Activated T-helper 1 cell treated with anti-CD3 and anti-CD28 coated beads, Interleukin-12 subunit alpha, Interleukin-12 subunit beta, Interleukin-2, Interleukin-4 antibody, amounts not matched to agents 30 ng/mL and 10 ng/mL and 1 ng/mL, durations not matched to agents 14 hours and 24 hours and 36 hours (primary cell): ENCODE measurements at regions of chr19 and their contacts with region 1.

Region 1: GRCh38 chr19:53867225-53868090 is at the start of gene MYADM:
- DNase-seq: peak; percentile 100
- H3K4me3 Mint-ChIP-seq: peak within 1 kb of the TSS; percentile 94
- H3K27ac Mint-ChIP-seq: peak within 1 kb of the TSS; percentile 96
- H3K4me1 Mint-ChIP-seq: peaks cover 37% of the 10 kb centered on the region
- H3K27me3 Mint-ChIP-seq: peaks cover 3% of the 10 kb centered on the region
- total RNA-seq, gene MYADM: 58.8 and 63.1 TPM in 2 replicates

Region 2: GRCh38 chr19:53333463-53334449 is 533.7 kb before region 1 on chr19 and contains the start of gene ZNF845:
- intact Hi-C with region 1: loop called (anchors 1 kb)
- DNase-seq: peak; percentile 95
- H3K4me3 Mint-ChIP-seq: peak within 1 kb of the TSS; percentile 91
- H3K27ac Mint-ChIP-seq: peak within 1 kb of the TSS; percentile 80
- H3K4me1 Mint-ChIP-seq: peaks cover 10% of the 10 kb centered on the region
- H3K27me3 Mint-ChIP-seq: no peaks in the 10 kb centered on the region
- total RNA-seq, gene ZNF845: 6.5 and 6.7 TPM in 2 replicates

Region 3: DNA sequence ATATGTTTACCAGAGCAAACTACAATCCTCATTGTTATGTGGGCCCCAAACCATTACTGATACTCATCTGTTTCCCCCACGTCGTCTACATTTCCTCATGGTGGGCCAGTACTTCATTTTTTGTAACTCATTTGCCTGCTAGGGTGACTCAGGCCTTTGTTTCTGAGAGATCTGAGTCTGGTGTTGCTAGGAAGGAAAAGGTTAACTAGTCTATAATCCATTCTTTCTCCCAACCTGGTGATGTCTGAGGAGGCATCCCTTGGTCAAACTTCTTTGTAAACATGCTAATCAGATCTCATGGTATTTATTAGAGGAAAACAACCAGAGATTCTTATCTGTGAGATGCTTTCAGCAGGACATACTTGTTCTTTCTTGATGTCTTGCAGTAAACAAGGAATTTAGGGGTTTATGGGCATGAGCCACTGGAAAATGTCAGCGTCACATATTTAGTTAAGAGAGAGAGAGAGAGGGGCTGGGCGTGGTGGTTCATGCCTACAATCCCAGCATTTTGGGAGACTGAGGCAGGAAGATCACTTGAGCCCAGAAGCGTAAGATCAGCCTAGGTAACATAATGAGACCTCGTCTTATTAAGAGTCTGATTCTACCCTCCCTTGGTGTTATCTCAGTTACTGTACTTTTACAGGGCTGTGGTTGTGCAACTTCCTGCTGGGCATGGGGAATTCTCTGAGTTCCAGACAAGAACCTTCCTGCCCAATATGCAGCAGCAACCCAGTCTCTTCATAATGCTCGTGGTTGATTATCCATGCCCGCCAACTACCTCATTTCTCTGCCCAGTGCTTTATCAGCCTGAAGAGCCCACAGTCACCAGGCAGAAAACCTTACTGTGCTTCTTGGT is 245.3 kb before region 1 on chr19:
- intact Hi-C with region 1: no loop called
- DNase-seq: no peak
- H3K4me3 Mint-ChIP-seq: no peak overlapping the region
- H3K27ac Mint-ChIP-seq: no peak overlapping the region
- H3K4me1 Mint-ChIP-seq: no peaks in the 10 kb centered on the region
- H3K27me3 Mint-ChIP-seq: no peaks in the 10 kb centered on the region

Region 4: DNA sequence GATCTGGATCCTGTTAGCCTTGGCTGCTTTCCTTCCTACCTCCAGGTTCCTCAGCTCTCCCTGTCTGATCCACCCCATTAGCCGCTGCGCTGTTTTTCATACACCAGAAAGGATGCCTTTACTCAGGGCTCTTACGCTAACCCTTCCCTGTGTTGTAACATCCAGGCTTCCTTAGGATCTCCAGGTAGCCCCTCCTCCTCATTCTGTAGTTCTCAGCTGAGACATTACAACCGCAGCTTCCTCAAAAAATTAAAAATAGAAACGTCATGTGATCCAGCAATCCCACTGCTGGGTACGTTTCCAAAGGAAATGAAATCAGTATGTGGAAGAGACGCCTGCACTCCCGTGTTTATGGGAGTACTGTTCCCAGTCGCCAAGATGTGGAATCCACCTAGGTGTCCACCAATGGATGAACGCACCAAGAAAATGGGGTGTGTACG is 18.2 kb before region 1 on chr19:
- intact Hi-C with region 1: loop called (anchors 1 kb)
- DNase-seq: no peak
- H3K4me3 Mint-ChIP-seq: no peak overlapping the region
- H3K27ac Mint-ChIP-seq: no peak overlapping the region
- H3K4me1 Mint-ChIP-seq: peaks cover 20% of the 10 kb centered on the region
- H3K27me3 Mint-ChIP-seq: peaks cover 20% of the 10 kb centered on the region

Region 5: GRCh38 chr19:53942001-53942786 is 74.7 kb after region 1 on chr19:
- intact Hi-C with region 1: no loop called
- DNase-seq: no peak
- H3K4me3 Mint-ChIP-seq: no peak overlapping the region
- H3K27ac Mint-ChIP-seq: no peak overlapping the region
- H3K4me1 Mint-ChIP-seq: no peaks in the 10 kb centered on the region
- H3K27me3 Mint-ChIP-seq: peaks cover 15% of the 10 kb centered on the region

Region 6: DNA sequence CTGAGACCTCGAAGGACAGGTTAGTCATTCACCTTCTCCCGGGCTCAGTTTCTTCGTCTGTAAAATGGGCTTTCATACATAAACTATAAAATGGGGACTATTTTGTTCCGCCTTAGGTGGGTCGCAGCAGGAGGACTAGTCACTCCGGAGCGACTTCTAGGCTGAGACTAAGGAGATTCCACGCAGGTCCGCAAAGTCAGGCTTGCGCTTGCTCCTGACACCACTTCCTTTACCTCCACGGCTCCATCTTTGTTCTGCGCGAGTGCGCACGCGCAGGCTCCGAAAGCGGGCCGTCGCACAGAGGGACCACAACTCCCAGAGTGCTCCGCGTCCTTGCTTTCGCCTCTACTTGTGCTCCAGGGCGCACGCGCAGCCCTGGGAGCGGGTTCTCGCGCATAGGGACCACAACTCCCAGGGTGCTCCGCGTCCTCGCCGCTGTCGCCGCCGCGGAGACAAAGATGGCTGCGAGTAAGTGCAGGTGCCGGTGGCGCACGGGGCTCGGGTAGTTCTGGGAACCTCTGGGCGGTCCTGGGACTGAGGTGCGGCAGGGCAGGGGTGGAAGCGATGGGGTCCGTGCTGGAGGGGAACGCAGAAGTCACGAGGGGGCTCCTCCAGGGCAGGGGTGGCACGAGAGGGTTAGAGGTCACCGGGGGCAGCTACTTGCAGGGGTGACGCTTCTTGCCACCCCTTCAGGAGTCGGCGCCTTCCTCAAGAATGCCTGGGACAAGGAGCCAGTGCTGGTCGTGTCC is 235.1 kb after region 1 on chr19 and contains the start of gene NDUFA3:
- intact Hi-C with region 1: loop called (anchors 5 kb)
- DNase-seq: peak; percentile 98
- H3K4me3 Mint-ChIP-seq: peak within 1 kb of the TSS; percentile 99
- H3K27ac Mint-ChIP-seq: peak within 1 kb of the TSS; percentile 87
- H3K4me1 Mint-ChIP-seq: peaks cover 17% of the 10 kb centered on the region
- H3K27me3 Mint-ChIP-seq: no peaks in the 10 kb centered on the region
- total RNA-seq, gene NDUFA3: 110 and 125 TPM in 2 replicates

Region 7: GRCh38 chr19:54137086-54137921 is 269.8 kb after region 1 on chr19 and contains the start of gene CNOT3:
- intact Hi-C with region 1: loop called (anchors 1 kb)
- DNase-seq: peak; percentile 99
- H3K4me3 Mint-ChIP-seq: peak within 1 kb of the TSS; percentile 93
- H3K27ac Mint-ChIP-seq: peak within 1 kb of the TSS; percentile 92
- H3K4me1 Mint-ChIP-seq: peaks cover 42% of the 10 kb centered on the region
- H3K27me3 Mint-ChIP-seq: no peaks in the 10 kb centered on the region
- total RNA-seq, gene CNOT3: 70.0 and 73.2 TPM in 2 replicates

Region 8: DNA sequence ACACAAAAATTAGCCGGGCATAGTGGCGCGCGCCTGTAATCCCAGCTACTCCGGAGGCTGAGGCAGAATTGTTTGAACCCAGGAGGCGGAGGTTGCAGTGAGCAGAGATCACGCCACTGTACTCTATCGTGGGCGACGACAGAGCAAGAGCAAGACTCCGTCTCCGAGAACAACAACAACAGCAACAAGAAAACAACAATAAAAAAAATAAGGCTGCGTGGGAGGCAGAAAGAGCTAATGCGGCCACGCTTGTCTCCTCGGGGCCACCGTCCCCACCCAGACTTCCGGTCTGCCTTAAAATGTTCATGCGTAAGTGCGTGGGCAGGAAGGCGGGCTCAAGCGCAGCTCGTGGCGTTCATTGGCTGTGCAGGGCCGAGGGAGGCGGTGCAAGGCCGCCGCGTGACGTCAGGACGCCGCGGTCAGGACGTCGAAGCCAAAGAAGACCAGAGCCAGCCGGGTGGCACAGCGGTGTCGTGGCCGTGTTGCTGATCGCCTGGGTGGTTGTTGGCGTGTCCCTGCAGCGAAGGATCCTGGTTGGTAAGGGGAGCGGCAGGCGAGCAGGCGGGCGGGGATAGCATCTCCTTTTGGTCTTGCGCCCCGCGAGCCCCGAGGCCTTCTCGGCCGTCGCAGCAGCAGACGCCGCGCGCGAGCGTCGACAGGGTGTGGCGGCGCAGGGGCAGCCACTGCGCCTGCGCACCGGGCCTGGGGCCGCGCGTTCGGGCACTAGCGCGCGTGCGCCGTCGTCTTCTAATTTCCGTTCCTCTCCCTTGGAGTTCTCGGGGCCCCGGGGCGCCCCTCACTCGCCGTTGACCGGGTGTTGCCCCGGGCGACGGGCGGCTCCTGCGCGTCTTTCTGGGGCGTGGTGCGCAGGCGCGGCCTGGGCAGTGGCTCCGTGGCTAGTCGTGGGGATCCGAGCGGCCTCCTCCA is 581.6 kb after region 1 on chr19 and contains the start of gene LENG8:
- intact Hi-C with region 1: loop called (anchors 5 kb)
- DNase-seq: peak; percentile 96
- H3K4me3 Mint-ChIP-seq: peak within 1 kb of the TSS; percentile 99
- H3K27ac Mint-ChIP-seq: peak within 1 kb of the TSS; percentile 98
- H3K4me1 Mint-ChIP-seq: peaks cover 36% of the 10 kb centered on the region
- H3K27me3 Mint-ChIP-seq: no peaks in the 10 kb centered on the region
- total RNA-seq, gene LENG8: 192 and 193 TPM in 2 replicates

Region 9: GRCh38 chr19:55599468-55600279 is 1732.2 kb after region 1 on chr19 and contains the start of gene FIZ1:
- intact Hi-C with region 1: loop called (anchors 5 kb)
- DNase-seq: peak; percentile 95
- H3K4me3 Mint-ChIP-seq: peak within 1 kb of the TSS; percentile 93
- H3K27ac Mint-ChIP-seq: peak within 1 kb of the TSS; percentile 98
- H3K4me1 Mint-ChIP-seq: peaks cover 28% of the 10 kb centered on the region
- H3K27me3 Mint-ChIP-seq: no peaks in the 10 kb centered on the region
- total RNA-seq, gene FIZ1: 24.2 and 24.7 TPM in 2 replicates